Heart left ventricle (tissue), 16 donors: ENCODE measurements at regions of chr17 and their contacts with region 1.

Region 1: DNA sequence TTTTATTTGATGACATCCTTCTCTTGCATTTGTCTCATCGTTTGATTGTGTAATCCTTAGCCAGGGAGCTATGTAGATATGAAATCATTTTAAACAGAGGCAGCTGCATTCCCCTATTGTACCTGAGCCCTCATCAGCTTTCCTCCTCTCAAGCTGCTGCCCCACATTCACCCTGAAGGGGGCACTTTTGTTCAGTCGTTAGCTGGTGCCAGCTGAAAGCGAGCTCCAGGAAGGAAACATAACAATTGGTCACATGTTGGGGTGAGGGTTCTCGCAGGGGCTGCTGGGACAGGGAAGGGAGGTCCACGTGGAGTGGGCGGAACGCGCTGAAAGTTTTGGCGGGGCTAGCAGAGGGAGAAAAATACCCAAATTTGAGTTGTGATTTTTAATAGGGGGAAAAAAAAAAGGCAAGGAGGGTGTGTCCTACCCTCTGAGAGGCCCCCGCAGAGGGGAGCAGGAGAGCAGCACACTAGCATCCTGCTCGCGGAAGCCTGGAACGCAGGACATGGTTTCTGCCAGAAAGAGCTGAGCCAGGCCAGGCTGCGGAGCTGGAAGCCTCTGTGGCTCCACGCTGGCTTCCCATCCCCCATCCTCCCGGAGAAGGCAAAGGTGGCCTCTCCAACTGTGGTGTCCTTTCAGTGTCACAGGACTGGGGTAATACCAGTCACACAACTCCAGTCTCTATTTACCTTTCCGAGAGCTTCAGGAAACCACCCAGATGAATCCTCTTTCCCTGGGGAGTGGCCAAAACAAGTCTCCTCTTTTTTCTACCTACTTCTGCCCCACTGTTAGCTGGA is 8.5 kb upstream of the MSL1 start:
- DNase-seq: peak; percentile 91 to 94 (median 93)
- ATAC-seq: peak; percentile 71 to 83 (median 74)
- H3K4me3 ChIP-seq: peak overlapping the region in 11 of 12 donors; percentile 27 to 61 (median 47)
- H3K27ac ChIP-seq: peak overlapping the region; percentile 72 to 100 (median 95)
- H3K4me1 ChIP-seq: peaks cover 29 to 61% (median 56%) of the 10 kb centered on the region in 12 donors
- H3K27me3 ChIP-seq: no peaks in the 10 kb centered on the region
- CTCF ChIP-seq: peak; percentile 71 to 96 (median 84)
- POLR2A ChIP-seq: no peak

Region 2: DNA sequence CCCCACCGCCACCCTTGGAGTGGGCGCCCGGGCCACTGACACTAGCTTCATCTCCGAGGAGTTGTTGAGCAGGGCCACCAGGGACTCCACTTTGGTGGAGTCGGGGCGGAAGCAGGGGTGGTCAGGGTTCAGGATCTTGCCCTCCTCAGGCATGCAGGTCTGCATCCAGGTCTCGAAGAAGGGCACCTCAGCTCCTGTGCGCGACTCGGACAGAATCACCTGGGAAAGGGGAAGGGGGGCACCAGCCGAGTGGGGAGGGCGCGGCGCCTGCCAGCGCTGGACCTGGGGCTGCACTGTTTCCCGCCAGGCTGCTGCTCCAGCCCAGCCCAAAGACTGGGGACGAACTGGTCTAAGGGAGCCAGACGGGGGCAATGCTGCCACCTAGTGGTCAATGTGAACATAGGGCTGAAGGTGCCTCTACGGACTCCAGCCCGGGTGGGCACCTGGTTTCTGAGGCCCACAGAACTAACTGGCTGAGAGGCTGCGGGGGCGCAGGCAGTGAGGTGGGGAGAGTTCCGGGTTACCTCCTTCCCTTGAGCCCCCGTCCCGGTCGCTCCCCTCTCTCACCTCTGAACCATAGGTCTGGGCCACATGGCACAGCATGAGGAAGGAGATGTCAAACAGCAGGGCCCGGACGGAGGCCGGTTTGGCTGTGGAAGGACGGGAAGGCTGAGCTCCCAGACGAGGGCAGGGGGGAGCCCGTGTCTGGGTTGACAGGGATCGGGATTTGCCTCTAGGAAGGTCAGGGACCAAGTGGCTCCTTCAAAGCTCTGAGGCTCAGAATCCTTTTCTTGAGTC is 86.3 kb before region 1 on chr17:
- intact Hi-C with region 1: loop called in 1 of 10 experiments (anchors 5 kb)
- DNase-seq: peak; percentile 83 to 90 (median 83)
- ATAC-seq: peak; percentile 85 to 93 (median 88)
- H3K4me3 ChIP-seq: no peak overlapping the region
- H3K27ac ChIP-seq: peak overlapping the region in 3 of 12 donors; percentile 14 to 31 (median 18)
- H3K4me1 ChIP-seq: peaks cover 0 to 30% (median 11%) of the 10 kb centered on the region in 12 donors
- H3K27me3 ChIP-seq: no peaks in the 10 kb centered on the region
- CTCF ChIP-seq: peak; percentile 86 to 98 (median 94)
- POLR2A ChIP-seq: no peak

Region 3: DNA sequence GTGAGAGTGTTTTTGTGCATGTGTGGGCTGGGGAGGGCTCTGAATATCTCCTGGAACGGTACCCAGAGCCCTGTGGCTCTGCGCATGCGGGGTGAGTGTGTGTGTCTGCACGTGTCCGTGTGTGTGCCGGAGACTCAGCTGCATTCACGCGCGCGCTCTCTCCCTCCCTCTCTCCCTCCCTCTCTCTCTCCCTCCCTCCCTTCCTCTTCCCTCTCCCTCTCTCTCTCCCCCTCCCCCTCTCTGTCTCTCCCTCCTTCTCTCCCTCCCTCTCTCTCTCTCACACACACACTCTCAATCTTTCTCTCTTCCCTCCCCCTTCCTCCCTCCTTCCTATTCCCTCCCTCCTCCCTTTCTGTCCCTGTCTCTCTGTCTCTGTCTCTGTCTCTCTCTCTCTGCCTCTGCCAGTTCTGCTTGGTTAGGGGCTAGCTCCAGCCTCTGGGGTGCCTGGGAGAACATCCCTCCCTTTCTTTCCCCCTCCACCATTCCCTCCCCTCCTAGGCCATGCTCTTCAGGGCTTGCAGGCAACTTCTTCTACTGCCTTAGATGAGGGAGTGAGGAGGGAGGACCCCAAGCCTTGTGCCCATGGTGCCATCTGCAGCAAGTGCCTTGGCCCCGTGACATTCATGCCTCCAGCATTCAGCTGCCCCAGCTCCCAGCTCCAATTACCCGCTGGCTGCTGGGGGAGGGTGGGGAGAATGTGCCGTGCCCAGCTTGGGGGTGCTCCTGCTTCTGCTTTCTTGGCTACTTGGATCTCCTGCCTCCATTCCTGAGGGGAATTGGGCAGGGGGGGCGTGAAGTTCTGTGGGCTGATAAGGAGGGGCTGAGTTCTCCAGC is 44.2 kb before region 1 on chr17:
- intact Hi-C with region 1: loop called in 5 of 10 experiments (anchors 5 kb)
- DNase-seq: peak; percentile 91 to 97 (median 93)
- ATAC-seq: peak; percentile 32 to 71 (median 54)
- H3K4me3 ChIP-seq: peak overlapping the region in 11 of 12 donors; percentile 11 to 54 (median 40)
- H3K27ac ChIP-seq: peak overlapping the region; percentile 79 to 100 (median 95)
- H3K4me1 ChIP-seq: peaks cover 38 to 99% (median 89%) of the 10 kb centered on the region in 12 donors
- H3K27me3 ChIP-seq: no peaks in the 10 kb centered on the region
- CTCF ChIP-seq: no peak
- POLR2A ChIP-seq: no peak

Region 4: DNA sequence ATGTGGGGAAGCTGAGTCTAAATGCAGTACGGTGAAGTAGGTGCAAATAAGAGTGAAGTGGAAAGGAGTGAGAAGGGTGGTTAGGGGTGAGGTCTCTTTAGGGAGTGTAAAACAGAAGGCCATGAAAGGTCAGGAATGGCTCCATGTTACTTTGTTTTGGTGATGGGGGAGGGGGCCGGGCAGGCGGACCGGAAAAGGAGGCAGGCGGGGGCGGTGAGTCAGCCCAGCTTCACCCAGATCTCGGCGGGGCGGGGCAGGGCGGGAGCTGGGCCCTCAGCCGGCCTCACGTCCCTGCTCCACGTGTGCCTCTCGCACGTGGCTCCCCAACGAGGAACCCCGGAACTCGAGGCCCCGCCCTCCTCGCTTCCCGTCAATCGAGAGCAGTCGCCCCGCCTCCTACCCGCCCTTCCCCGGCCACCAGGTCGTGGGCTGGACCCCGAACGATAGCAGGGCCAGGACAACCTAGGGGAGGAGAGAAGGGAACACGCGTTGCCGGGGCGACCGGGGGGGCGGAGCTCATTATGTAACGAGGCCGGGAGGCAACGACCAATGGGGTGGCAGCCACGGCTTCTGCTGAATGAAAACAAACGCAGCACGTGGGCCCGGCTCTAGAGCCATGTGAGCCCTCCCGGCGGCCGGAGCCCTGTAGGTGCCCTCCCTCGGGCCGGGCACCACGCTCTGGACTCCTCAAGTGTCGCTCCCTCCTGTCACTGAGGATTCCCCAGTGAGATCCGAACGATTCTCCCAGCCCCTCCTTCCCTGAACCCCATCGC is 14.3 kb before region 1 on chr17:
- intact Hi-C with region 1: loop called in 5 of 10 experiments (anchors 1 to 2 kb)
- DNase-seq: peak; percentile 100
- ATAC-seq: peak; percentile 75 to 87 (median 82)
- H3K4me3 ChIP-seq: peak overlapping the region; percentile 72 to 100 (median 84)
- H3K27ac ChIP-seq: peak overlapping the region; percentile 93 to 100 (median 98)
- H3K4me1 ChIP-seq: peaks cover 20 to 93% (median 79%) of the 10 kb centered on the region in 12 donors
- H3K27me3 ChIP-seq: no peaks in the 10 kb centered on the region
- CTCF ChIP-seq: no peak
- POLR2A ChIP-seq: peak; percentile 64 to 89

Region 5: GRCh38 chr17:40191237-40192208 is 78.2 kb after region 1 on chr17:
- intact Hi-C with region 1: loop called in 1 of 10 experiments (anchors 2 kb)
- DNase-seq: peak; percentile 71 to 86 (median 78)
- ATAC-seq: peak; percentile 59 to 87 (median 84)
- H3K4me3 ChIP-seq: peak overlapping the region in 11 of 12 donors; percentile 40 to 75 (median 62)
- H3K27ac ChIP-seq: peak overlapping the region in 7 of 12 donors; percentile 1 to 67 (median 46)
- H3K4me1 ChIP-seq: peaks cover 0 to 23% (median 8%) of the 10 kb centered on the region in 12 donors
- H3K27me3 ChIP-seq: no peaks in the 10 kb centered on the region
- CTCF ChIP-seq: peak; percentile 46 to 84 (median 69)
- POLR2A ChIP-seq: no peak